ENCODE measurements at regions of chr3 and their contacts with region 1.

Region 1: GRCh38 chr3:42839616-42840015 is 30.4 kb downstream of the ACKR2 start:
- DNase-seq: peak; percentile 49
- H3K4me3 ChIP-seq: no peak overlapping the region
- H3K27ac ChIP-seq: no peak overlapping the region
- H3K4me1 ChIP-seq: no peaks in the 10 kb centered on the region
- H3K27me3 ChIP-seq: no peaks in the 10 kb centered on the region
- CTCF ChIP-seq: peak; percentile 72

Region 2: GRCh38 chr3:42732196-42732828 is 107.3 kb before region 1 on chr3:
- intact Hi-C with region 1: no loop called
- DNase-seq: no peak
- H3K4me3 ChIP-seq: no peak overlapping the region
- H3K27ac ChIP-seq: no peak overlapping the region
- H3K4me1 ChIP-seq: no peaks in the 10 kb centered on the region
- H3K27me3 ChIP-seq: no peaks in the 10 kb centered on the region
- CTCF ChIP-seq: no peak

Region 3: DNA sequence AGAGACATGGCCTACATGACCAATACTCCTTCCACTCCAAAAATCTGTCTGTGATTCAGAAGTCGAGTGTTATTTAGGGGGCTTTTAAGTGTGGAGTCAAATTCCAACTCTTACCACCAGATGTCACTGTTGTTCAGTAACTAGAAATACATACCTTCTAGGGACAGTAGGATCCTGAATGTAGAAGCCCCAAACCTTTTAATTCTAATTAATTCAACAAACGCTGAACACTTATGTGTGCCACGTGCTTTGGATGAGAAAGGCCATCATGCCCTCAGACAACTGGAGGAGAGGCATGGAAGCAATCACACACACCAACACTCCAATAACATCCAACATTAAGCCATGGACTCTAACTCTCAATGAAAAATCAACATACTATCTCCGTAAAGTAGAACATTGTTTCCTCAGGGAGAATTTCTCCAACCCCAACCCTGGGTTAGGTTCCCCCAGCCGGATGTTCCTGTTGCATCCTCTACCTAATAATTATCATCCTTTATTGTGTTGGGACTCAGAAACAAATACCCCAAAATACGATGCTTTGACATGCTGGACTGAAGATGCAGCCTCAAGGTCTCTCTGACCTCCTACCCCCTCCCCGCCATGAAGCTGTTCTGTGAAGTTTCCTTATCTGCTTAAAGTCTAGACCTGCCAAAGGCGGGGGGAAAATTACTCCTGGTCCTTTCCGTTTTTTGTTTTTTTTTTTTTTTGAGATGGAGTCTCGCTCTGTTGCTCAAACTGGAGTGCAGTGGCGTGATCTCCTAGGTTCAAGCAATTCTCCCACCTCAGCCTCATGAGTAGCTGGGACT is 58.5 kb before region 1 on chr3:
- intact Hi-C with region 1: loop called (anchors 5 kb)
- DNase-seq: peak; percentile 52
- H3K4me3 ChIP-seq: no peak overlapping the region
- H3K27ac ChIP-seq: no peak overlapping the region
- H3K4me1 ChIP-seq: no peaks in the 10 kb centered on the region
- H3K27me3 ChIP-seq: no peaks in the 10 kb centered on the region
- CTCF ChIP-seq: peak; percentile 77

Region 4: DNA sequence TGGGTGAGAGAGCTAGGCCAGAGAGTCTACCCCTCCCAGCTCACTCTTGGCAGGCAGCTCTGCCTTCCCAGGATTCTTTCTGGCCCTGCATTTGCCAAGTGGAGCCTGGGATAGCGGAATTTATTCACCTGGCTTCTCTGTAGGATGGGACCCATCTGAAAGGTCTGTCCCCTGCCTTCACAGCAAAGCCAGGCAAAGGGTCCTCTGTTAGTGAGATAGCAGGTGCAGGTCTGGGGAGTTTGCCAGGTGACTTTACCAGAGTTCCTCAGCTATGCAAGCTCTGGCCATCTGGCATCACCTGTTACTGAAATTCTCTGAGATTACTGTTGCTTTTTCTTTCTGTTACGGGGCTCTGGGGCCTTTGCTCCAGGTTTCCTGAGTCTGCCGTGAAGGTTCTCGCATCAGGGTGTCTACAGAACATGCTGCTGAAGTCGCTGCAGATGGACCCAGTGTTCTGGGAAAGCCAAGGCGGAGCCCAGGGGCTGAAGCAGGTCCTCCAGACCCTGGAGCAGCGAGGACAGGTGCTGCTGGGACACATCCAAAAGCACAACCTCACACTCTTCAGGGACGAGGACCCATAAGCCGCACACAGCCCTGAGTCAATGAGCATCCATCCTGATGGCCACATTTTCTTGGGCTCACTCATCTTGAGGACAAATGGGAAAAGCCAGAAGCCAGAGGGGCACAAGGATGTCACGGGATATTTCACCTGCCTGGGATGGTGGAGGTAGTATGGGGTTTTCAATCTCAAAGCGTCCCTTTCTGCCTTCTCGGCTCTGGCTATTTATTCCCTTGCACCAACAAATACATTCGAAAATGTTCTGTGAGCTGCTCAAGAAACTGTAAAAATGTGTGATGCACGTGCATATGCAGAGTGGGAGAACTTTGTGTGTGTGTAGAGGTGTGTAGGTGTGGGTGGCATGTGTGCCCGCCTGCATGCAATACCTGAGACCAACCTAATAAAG is 216.5 kb after region 1 on chr3:
- intact Hi-C with region 1: no loop called
- DNase-seq: no peak
- H3K4me3 ChIP-seq: no peak overlapping the region
- H3K27ac ChIP-seq: no peak overlapping the region
- H3K4me1 ChIP-seq: no peaks in the 10 kb centered on the region
- H3K27me3 ChIP-seq: no peaks in the 10 kb centered on the region
- CTCF ChIP-seq: no peak